Naive thymus-derived CD4-positive, alpha-beta T cell (primary cell): ENCODE measurements at regions of chr13 and their contacts with region 1.

Region 1: GRCh38 chr13:59391696-59392095 is 772.0 kb downstream of the DIAPH3 start:
- DNase-seq: peak; percentile 8 to 80 (median 73)
- ATAC-seq: peak; percentile 95
- H3K4me3 ChIP-seq: no peak overlapping the region
- H3K4me3 Mint-ChIP-seq: no peak overlapping the region
- H3K27ac ChIP-seq: no peak overlapping the region
- H3K27ac Mint-ChIP-seq: no peak overlapping the region
- H3K4me1 ChIP-seq: peaks cover 0 to 8% of the 10 kb centered on the region in 2 donors
- H3K4me1 Mint-ChIP-seq: peaks cover 0 to 6% (median 0%) of the 10 kb centered on the region in 7 donors
- H3K27me3 ChIP-seq: no peaks in the 10 kb centered on the region
- H3K27me3 Mint-ChIP-seq: peaks cover 0 to 22% (median 6%) of the 10 kb centered on the region in 5 donors

Region 2: GRCh38 chr13:59771272-59771671 is 379.6 kb after region 1 on chr13:
- CTCF ChIA-PET with region 1: interaction called, 4 read pairs
- POLR2A ChIA-PET with region 1: no interaction called
- intact Hi-C with region 1: loop called in 1 of 2 experiments (anchors 1 kb)
- DNase-seq: no peak
- ATAC-seq: no peak
- H3K4me3 ChIP-seq: no peak overlapping the region
- H3K4me3 Mint-ChIP-seq: no peak overlapping the region
- H3K27ac ChIP-seq: no peak overlapping the region
- H3K27ac Mint-ChIP-seq: no peak overlapping the region
- H3K4me1 ChIP-seq: no peaks in the 10 kb centered on the region
- H3K4me1 Mint-ChIP-seq: peaks cover 0 to 6% (median 0%) of the 10 kb centered on the region in 7 donors
- H3K27me3 ChIP-seq: no peaks in the 10 kb centered on the region
- H3K27me3 Mint-ChIP-seq: no peaks in the 10 kb centered on the region

Region 3: GRCh38 chr13:59924256-59924655 is 532.6 kb after region 1 on chr13:
- CTCF ChIA-PET with region 1: no interaction called
- POLR2A ChIA-PET with region 1: no interaction called
- intact Hi-C with region 1: no loop called
- DNase-seq: no peak
- ATAC-seq: no peak
- H3K4me3 ChIP-seq: no peak overlapping the region
- H3K4me3 Mint-ChIP-seq: no peak overlapping the region
- H3K27ac ChIP-seq: no peak overlapping the region
- H3K27ac Mint-ChIP-seq: no peak overlapping the region
- H3K4me1 ChIP-seq: no peaks in the 10 kb centered on the region
- H3K4me1 Mint-ChIP-seq: peaks cover 0 to 1% (median 0%) of the 10 kb centered on the region in 7 donors
- H3K27me3 ChIP-seq: no peaks in the 10 kb centered on the region
- H3K27me3 Mint-ChIP-seq: no peaks in the 10 kb centered on the region

Region 4: GRCh38 chr13:60163478-60164233 is 772.0 kb after region 1 on chr13 and contains the start of gene DIAPH3:
- CTCF ChIA-PET with region 1: no interaction called
- POLR2A ChIA-PET with region 1: interaction called, 3 read pairs
- intact Hi-C with region 1: loop called (anchors 1 to 5 kb)
- DNase-seq: peak; percentile 84 to 93 (median 90)
- ATAC-seq: peak; percentile 100
- H3K4me3 ChIP-seq: peak within 1 kb of the TSS; percentile 92
- H3K4me3 Mint-ChIP-seq: peak within 1 kb of the TSS; percentile 92 to 98 (median 96)
- H3K27ac ChIP-seq: peak within 1 kb of the TSS; percentile 78
- H3K27ac Mint-ChIP-seq: peak within 1 kb of the TSS; percentile 84 to 96 (median 95)
- H3K4me1 ChIP-seq: no peaks in the 10 kb centered on the region
- H3K4me1 Mint-ChIP-seq: peaks cover 17 to 36% (median 29%) of the 10 kb centered on the region in 7 donors
- H3K27me3 ChIP-seq: no peaks in the 10 kb centered on the region
- H3K27me3 Mint-ChIP-seq: peaks cover 0 to 16% (median 5%) of the 10 kb centered on the region in 5 donors
- total RNA-seq, gene DIAPH3: 0.37 to 17.5 TPM in 2 of 5 experiments, not detected in the others

Region 5: GRCh38 chr13:60335531-60335930 is 943.8 kb after region 1 on chr13:
- CTCF ChIA-PET with region 1: interaction called, 4 read pairs
- POLR2A ChIA-PET with region 1: no interaction called
- intact Hi-C with region 1: loop called (anchors 1 to 2 kb)
- DNase-seq: peak in 3 of 9 donors; percentile 3 to 8 (median 4)
- ATAC-seq: no peak
- H3K4me3 ChIP-seq: no peak overlapping the region
- H3K4me3 Mint-ChIP-seq: no peak overlapping the region
- H3K27ac ChIP-seq: no peak overlapping the region
- H3K27ac Mint-ChIP-seq: no peak overlapping the region
- H3K4me1 ChIP-seq: no peaks in the 10 kb centered on the region
- H3K4me1 Mint-ChIP-seq: no peaks in the 10 kb centered on the region
- H3K27me3 ChIP-seq: no peaks in the 10 kb centered on the region
- H3K27me3 Mint-ChIP-seq: peaks cover 6 to 16% (median 11%) of the 10 kb centered on the region in 5 donors